T-cell (primary cell): ENCODE measurements at regions of chr12 and their contacts with region 1.

Region 1: GRCh38 chr12:95117178-95117599 is 43.8 kb upstream of the NR2C1 start:
- DNase-seq: peak; percentile 19 to 80 (median 56)
- ATAC-seq: peak; percentile 63 to 86 (median 82)
- H3K4me3 ChIP-seq: no peak overlapping the region
- H3K4me3 Mint-ChIP-seq: no peak overlapping the region
- H3K27ac ChIP-seq: no peak overlapping the region
- H3K27ac Mint-ChIP-seq: no peak overlapping the region
- H3K4me1 ChIP-seq: no peaks in the 10 kb centered on the region
- H3K4me1 Mint-ChIP-seq: peaks cover 0 to 1% (median 0%) of the 10 kb centered on the region in 3 donors
- H3K27me3 ChIP-seq: no peaks in the 10 kb centered on the region
- H3K27me3 Mint-ChIP-seq: no peaks in the 10 kb centered on the region

Region 2: GRCh38 chr12:95532851-95533250 is 415.7 kb after region 1 on chr12:
- CTCF ChIA-PET with region 1: interaction called, 45 to 68 read pairs
- POLR2A ChIA-PET with region 1: no interaction called
- DNase-seq: no peak
- ATAC-seq: no peak
- H3K4me3 ChIP-seq: no peak overlapping the region
- H3K4me3 Mint-ChIP-seq: no peak overlapping the region
- H3K27ac ChIP-seq: no peak overlapping the region
- H3K27ac Mint-ChIP-seq: no peak overlapping the region
- H3K4me1 ChIP-seq: no peaks in the 10 kb centered on the region
- H3K4me1 Mint-ChIP-seq: peaks cover 9 to 28% (median 19%) of the 10 kb centered on the region in 3 donors
- H3K27me3 ChIP-seq: no peaks in the 10 kb centered on the region
- H3K27me3 Mint-ChIP-seq: no peaks in the 10 kb centered on the region

Region 3: DNA sequence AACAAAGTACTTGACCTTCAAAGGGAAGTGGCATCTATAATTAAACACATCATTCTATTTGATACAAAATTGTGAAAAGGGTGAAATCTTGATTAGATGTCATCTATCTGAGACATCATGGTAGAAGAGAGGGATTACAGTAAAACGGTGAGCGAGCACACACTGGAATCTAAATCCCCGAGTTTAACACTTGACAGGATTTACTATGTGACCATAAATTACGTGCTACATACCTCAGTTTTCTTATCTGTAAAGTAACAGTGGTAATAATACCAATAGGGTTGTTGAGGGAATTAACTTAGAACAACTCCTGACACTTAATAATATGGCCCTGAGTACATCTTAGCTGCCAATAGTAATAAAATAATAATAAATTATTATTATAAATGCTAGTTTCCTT is 420.8 kb after region 1 on chr12:
- CTCF ChIA-PET with region 1: interaction called, 45 to 68 read pairs
- POLR2A ChIA-PET with region 1: no interaction called
- DNase-seq: no peak
- ATAC-seq: no peak
- H3K4me3 ChIP-seq: no peak overlapping the region
- H3K4me3 Mint-ChIP-seq: no peak overlapping the region
- H3K27ac ChIP-seq: no peak overlapping the region
- H3K27ac Mint-ChIP-seq: no peak overlapping the region
- H3K4me1 ChIP-seq: no peaks in the 10 kb centered on the region
- H3K4me1 Mint-ChIP-seq: peaks cover 2 to 7% (median 2%) of the 10 kb centered on the region in 3 donors
- H3K27me3 ChIP-seq: no peaks in the 10 kb centered on the region
- H3K27me3 Mint-ChIP-seq: no peaks in the 10 kb centered on the region

Region 4: GRCh38 chr12:96906849-96907670 is 1789.9 kb after region 1 on chr12 and contains the start of gene NEDD1:
- CTCF ChIA-PET with region 1: no interaction called
- POLR2A ChIA-PET with region 1: no interaction called
- DNase-seq: peak; percentile 55 to 88 (median 75)
- ATAC-seq: peak; percentile 86 to 87 (median 86)
- H3K4me3 ChIP-seq: peak within 1 kb of the TSS; percentile 85 to 98
- H3K4me3 Mint-ChIP-seq: peak within 1 kb of the TSS; percentile 95 to 96 (median 96)
- H3K27ac ChIP-seq: peak within 1 kb of the TSS; percentile 98
- H3K27ac Mint-ChIP-seq: peak within 1 kb of the TSS; percentile 95 to 97
- H3K4me1 ChIP-seq: peaks cover 12 to 22% of the 10 kb centered on the region in 2 experiments
- H3K4me1 Mint-ChIP-seq: peaks cover 48 to 50% (median 49%) of the 10 kb centered on the region in 3 donors
- H3K27me3 ChIP-seq: no peaks in the 10 kb centered on the region
- H3K27me3 Mint-ChIP-seq: peaks cover 0 to 1% of the 10 kb centered on the region in 2 donors
- total RNA-seq, gene NEDD1: 19.2 to 27.7 (median 23.6) TPM